ENCODE measurements at regions of chr7 and their contacts with region 1.

Region 1: DNA sequence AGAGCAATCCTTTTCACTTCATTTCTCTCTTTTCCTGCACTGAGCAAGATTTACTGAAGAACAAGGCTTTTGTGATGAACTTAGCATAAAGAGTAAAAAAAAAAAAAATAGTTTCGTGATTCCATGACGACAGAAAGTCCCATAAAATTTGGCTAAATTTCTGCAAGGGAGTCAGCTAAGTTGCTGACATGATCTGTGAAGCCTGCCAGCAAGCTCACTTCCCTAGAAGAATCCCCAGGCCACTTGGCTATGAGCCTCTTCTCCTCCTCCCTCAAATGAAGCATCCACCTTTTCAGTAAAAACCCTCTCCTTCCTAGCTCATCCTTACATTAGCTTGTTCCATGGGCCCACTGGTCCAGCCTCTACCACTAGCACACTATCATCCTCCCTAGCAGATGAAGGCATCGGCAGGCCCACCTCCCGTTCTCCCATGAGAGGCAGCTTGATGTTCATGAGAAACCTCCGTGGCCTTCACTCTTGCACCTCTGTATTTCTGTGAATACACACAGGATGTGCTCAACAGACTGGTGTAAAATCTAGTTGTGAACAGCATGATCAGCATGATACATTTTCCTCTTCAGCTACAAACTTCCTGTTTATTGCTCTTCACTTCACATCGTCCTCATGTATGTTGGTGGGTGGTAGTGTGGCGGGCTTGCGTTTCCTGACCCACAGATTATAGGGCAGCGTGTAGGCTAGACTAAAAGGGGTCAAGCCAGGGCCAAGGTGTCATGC is 30.9 kb downstream of the GIMAP8 start:
- DNase-seq: peak; percentile 27 to 84 (median 65)
- ATAC-seq: peak; percentile 63
- H3K4me3 ChIP-seq: peak overlapping the region; percentile 1 to 14
- H3K4me3 Mint-ChIP-seq: peak overlapping the region; percentile 81
- H3K27ac ChIP-seq: peak overlapping the region; percentile 55 to 91
- H3K27ac Mint-ChIP-seq: peak overlapping the region; percentile 100
- H3K4me1 ChIP-seq: peaks cover 89% of the 10 kb centered on the region
- H3K4me1 Mint-ChIP-seq: peaks cover 91% of the 10 kb centered on the region
- H3K27me3 ChIP-seq: no peaks in the 10 kb centered on the region
- H3K27me3 Mint-ChIP-seq: no peaks in the 10 kb centered on the region
- CTCF ChIP-seq: no peak

Region 2: GRCh38 chr7:150378853-150379440 is 102.4 kb before region 1 on chr7 and contains the start of gene ZNF775:
- CTCF ChIA-PET with region 1: no interaction called
- POLR2A ChIA-PET with region 1: no interaction called
- intact Hi-C with region 1: no loop called
- DNase-seq: peak; percentile 82 to 95 (median 91)
- ATAC-seq: peak; percentile 93
- H3K4me3 ChIP-seq: peak within 1 kb of the TSS; percentile 83 to 84
- H3K4me3 Mint-ChIP-seq: peak within 1 kb of the TSS; percentile 86
- H3K27ac ChIP-seq: peak within 1 kb of the TSS; percentile 10 to 48
- H3K27ac Mint-ChIP-seq: peak within 1 kb of the TSS; percentile 93
- H3K4me1 ChIP-seq: peaks cover 37% of the 10 kb centered on the region
- H3K4me1 Mint-ChIP-seq: peaks cover 53% of the 10 kb centered on the region
- H3K27me3 ChIP-seq: no peaks in the 10 kb centered on the region
- H3K27me3 Mint-ChIP-seq: no peaks in the 10 kb centered on the region
- CTCF ChIP-seq: no peak
- total RNA-seq, gene ZNF775: 0.33 to 0.58 TPM

Region 3: GRCh38 chr7:150466477-150466876 is 14.9 kb before region 1 on chr7:
- CTCF ChIA-PET with region 1: interaction called, 6 read pairs
- POLR2A ChIA-PET with region 1: interaction called, 8 read pairs
- intact Hi-C with region 1: loop called in 1 of 2 experiments (anchors 2 kb)
- DNase-seq: no peak
- ATAC-seq: no peak
- H3K4me3 ChIP-seq: no peak overlapping the region
- H3K4me3 Mint-ChIP-seq: peak overlapping the region; percentile 23
- H3K27ac ChIP-seq: peak overlapping the region in 1 of 2 experiments; percentile 17
- H3K27ac Mint-ChIP-seq: peak overlapping the region; percentile 53
- H3K4me1 ChIP-seq: peaks cover 73% of the 10 kb centered on the region
- H3K4me1 Mint-ChIP-seq: peaks cover 82% of the 10 kb centered on the region
- H3K27me3 ChIP-seq: no peaks in the 10 kb centered on the region
- H3K27me3 Mint-ChIP-seq: no peaks in the 10 kb centered on the region
- CTCF ChIP-seq: no peak

Region 4: DNA sequence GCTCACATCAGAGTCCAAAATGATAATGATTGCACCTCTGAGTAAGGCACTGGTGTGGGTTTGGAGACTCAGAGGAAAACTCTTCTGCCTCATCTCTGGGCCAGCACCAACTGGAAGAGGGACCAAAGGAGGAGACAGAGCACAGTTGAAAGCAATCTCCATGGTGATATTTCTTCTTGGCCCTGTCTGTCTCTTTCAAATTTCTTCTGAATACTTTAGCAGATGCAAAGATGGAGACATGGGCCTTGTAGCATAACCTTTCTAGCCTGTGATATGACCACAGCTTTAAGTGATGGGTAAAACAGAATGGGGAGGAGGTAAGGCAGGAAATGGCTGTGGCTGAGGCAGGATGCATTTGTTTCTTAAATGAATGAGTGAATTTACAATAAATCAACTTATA is 21.2 kb after region 1 on chr7:
- CTCF ChIA-PET with region 1: interaction called, 6 read pairs
- POLR2A ChIA-PET with region 1: interaction called, 21 read pairs
- intact Hi-C with region 1: loop called in 1 of 2 experiments (anchors 2 kb)
- DNase-seq: peak in 5 of 9 experiments; percentile 29 to 77 (median 61)
- ATAC-seq: peak; percentile 92
- H3K4me3 ChIP-seq: peak overlapping the region in 1 of 2 experiments; percentile 27
- H3K4me3 Mint-ChIP-seq: peak overlapping the region; percentile 23
- H3K27ac ChIP-seq: peak overlapping the region; percentile 22 to 61
- H3K27ac Mint-ChIP-seq: peak overlapping the region; percentile 86
- H3K4me1 ChIP-seq: peaks cover 46% of the 10 kb centered on the region
- H3K4me1 Mint-ChIP-seq: peaks cover 78% of the 10 kb centered on the region
- H3K27me3 ChIP-seq: no peaks in the 10 kb centered on the region
- H3K27me3 Mint-ChIP-seq: no peaks in the 10 kb centered on the region
- CTCF ChIP-seq: no peak

Region 5: GRCh38 chr7:150520145-150520544 is 38.8 kb after region 1 on chr7:
- CTCF ChIA-PET with region 1: interaction called, 11 read pairs
- POLR2A ChIA-PET with region 1: interaction called, 193 read pairs
- intact Hi-C with region 1: loop called in 1 of 2 experiments (anchors 2 kb)
- DNase-seq: peak in 6 of 9 experiments; percentile 9 to 75 (median 33)
- ATAC-seq: peak; percentile 27
- H3K4me3 ChIP-seq: peak overlapping the region; percentile 58 to 76
- H3K4me3 Mint-ChIP-seq: peak overlapping the region; percentile 100
- H3K27ac ChIP-seq: peak overlapping the region; percentile 58 to 75
- H3K27ac Mint-ChIP-seq: peak overlapping the region; percentile 91
- H3K4me1 ChIP-seq: peaks cover 12% of the 10 kb centered on the region
- H3K4me1 Mint-ChIP-seq: peaks cover 44% of the 10 kb centered on the region
- H3K27me3 ChIP-seq: no peaks in the 10 kb centered on the region
- H3K27me3 Mint-ChIP-seq: no peaks in the 10 kb centered on the region
- CTCF ChIP-seq: no peak

Region 6: GRCh38 chr7:150748376-150748775 is 267.0 kb after region 1 on chr7:
- CTCF ChIA-PET with region 1: no interaction called
- POLR2A ChIA-PET with region 1: interaction called, 12 read pairs
- intact Hi-C with region 1: no loop called
- DNase-seq: peak in 2 of 9 experiments; percentile 44 to 68
- ATAC-seq: peak; percentile 52
- H3K4me3 ChIP-seq: no peak overlapping the region
- H3K4me3 Mint-ChIP-seq: peak overlapping the region; percentile 20
- H3K27ac ChIP-seq: peak overlapping the region; percentile 11 to 65
- H3K27ac Mint-ChIP-seq: peak overlapping the region; percentile 97
- H3K4me1 ChIP-seq: peaks cover 94% of the 10 kb centered on the region
- H3K4me1 Mint-ChIP-seq: peaks cover 91% of the 10 kb centered on the region
- H3K27me3 ChIP-seq: no peaks in the 10 kb centered on the region
- H3K27me3 Mint-ChIP-seq: no peaks in the 10 kb centered on the region
- CTCF ChIP-seq: no peak

Measured in CD8-positive, alpha-beta T cell (primary cell).